Gastrocnemius medialis (tissue), 4 donors: ENCODE measurements at regions of chr22 and their contacts with region 1.

Region 1: GRCh38 chr22:20016734-20017621 is at the start of gene ARVCF:
- DNase-seq: peak; percentile 92
- ATAC-seq: peak; percentile 70 to 76
- H3K4me3 ChIP-seq: peak within 1 kb of the TSS; percentile 69 to 88 (median 86)
- H3K27ac ChIP-seq: peak within 1 kb of the TSS; percentile 75 to 81 (median 78)
- H3K4me1 ChIP-seq: peaks cover 23 to 28% of the 10 kb centered on the region in 2 donors
- H3K27me3 ChIP-seq: no peaks in the 10 kb centered on the region
- CTCF ChIP-seq: peak in 3 of 5 experiments; percentile 44 to 57 (median 56)
- POLR2A ChIP-seq: peak; percentile 44 to 70
- total RNA-seq, gene ARVCF: 6.9 to 19.6 (median 18.0) TPM

Region 2: DNA sequence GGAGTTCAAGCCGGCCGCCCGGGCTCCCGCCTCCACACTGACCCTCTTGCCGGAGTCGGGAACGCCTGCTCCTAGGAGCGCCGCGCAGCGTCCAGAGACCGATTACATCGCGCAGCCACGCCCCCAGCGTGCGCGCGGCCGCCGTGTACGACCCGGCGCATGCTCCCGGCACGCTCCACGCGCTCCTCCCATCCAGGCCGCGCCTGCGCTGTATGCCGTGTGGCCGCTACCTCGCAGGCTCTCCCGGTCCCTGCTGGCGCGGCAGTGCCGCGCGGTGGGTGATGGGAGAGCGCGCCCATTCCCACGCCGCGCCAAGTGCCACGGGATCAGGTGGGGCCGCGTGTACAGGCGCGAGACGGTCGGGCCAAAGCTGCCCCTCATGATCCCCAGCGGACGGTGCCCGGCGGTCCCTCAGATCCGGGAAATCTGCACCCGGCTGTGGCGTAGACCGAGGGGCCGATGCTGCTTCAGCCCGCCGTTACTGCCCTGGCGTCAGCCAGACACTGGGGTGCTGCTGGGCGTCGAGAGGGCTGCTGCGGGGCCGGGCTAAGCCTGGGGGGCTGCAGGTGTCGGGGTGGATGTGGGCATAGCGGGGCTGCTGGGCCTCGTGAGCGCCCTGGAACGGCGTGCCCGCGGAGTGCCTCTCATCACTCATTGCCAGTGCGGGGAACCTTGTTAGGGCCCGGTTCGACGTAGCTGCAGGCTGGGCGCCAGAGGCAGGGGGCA is 162.0 kb before region 1 on chr22 and contains the starts of genes GNB1L and RTL10:
- in situ Hi-C with region 1: no loop called
- intact Hi-C with region 1: loop called (anchors 5 kb)
- DNase-seq: peak; percentile 94 to 97
- ATAC-seq: peak; percentile 91
- H3K4me3 ChIP-seq: peak within 1 kb of the TSS; percentile 85 to 98 (median 94)
- H3K27ac ChIP-seq: peak within 1 kb of the TSS; percentile 91 to 98 (median 96)
- H3K4me1 ChIP-seq: peaks cover 20 to 31% of the 10 kb centered on the region in 2 donors
- H3K27me3 ChIP-seq: no peaks in the 10 kb centered on the region
- CTCF ChIP-seq: no peak
- POLR2A ChIP-seq: peak; percentile 96 to 98
- total RNA-seq, gene GNB1L: 4.4 to 9.6 (median 6.7) TPM
- total RNA-seq, gene RTL10: 3.5 to 12.8 (median 5.0) TPM

Region 3: GRCh38 chr22:19909350-19910179 is 107.4 kb before region 1 on chr22:
- in situ Hi-C with region 1: no loop called
- intact Hi-C with region 1: no loop called
- DNase-seq: peak; percentile 59 to 77
- ATAC-seq: peak; percentile 93 to 94
- H3K4me3 ChIP-seq: no peak overlapping the region
- H3K27ac ChIP-seq: no peak overlapping the region
- H3K4me1 ChIP-seq: no peaks in the 10 kb centered on the region
- H3K27me3 ChIP-seq: no peaks in the 10 kb centered on the region
- CTCF ChIP-seq: peak; percentile 77 to 93 (median 87)
- POLR2A ChIP-seq: no peak

Region 4: DNA sequence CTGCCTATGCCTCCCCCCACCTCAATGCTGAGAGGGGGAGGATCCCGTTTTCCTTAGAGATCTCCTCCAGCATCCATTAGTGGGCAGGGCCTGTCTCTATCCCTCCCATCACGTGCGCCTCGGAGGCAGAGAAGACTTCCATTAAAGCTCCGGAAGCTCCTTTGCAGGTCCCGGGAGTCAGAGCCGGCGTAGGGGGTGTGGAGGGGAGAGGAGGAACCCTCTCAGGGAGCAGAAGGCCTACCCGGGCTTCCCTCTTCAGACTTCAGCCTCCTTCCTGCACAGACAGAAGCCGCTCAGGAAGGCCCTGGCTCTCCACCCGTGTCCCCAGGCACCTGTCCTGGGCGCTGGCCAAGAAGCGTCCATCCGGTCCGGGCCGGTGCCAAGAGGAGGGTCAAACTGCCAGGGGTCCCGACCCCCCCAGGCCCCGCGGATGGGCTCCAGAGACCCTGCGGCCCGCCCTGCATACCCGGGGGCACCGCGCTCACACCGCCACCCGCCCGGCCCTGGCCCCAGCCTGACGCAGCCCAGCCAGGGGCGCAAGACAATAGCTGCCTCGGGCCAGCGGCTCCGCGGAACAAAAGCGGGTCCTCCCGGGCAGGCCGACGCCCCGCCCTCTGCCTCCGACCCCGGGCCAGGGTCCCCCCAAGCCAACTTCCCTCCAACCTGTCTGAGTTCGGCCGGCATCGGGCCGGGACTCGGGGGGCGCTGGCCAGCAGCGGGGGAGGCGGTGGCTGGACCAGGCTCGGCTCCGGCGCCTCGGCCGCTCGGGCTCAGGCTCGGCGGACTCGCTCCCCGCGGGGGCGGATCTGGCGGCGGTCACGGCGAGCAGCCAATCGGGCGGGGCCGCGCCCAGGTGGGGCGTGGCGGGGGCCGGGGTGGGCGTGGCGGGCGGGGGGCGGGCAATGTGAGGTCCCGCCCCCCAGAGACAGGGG is 30.3 kb before region 1 on chr22:
- in situ Hi-C with region 1: no loop called
- intact Hi-C with region 1: loop called (anchors 1 kb)
- DNase-seq: peak; percentile 50 to 73
- ATAC-seq: peak; percentile 59 to 64
- H3K4me3 ChIP-seq: peak overlapping the region; percentile 61 to 98 (median 86)
- H3K27ac ChIP-seq: peak overlapping the region; percentile 92 to 100 (median 96)
- H3K4me1 ChIP-seq: peaks cover 45 to 51% of the 10 kb centered on the region in 2 donors
- H3K27me3 ChIP-seq: no peaks in the 10 kb centered on the region
- CTCF ChIP-seq: no peak
- POLR2A ChIP-seq: peak; percentile 94 to 95

Region 5: DNA sequence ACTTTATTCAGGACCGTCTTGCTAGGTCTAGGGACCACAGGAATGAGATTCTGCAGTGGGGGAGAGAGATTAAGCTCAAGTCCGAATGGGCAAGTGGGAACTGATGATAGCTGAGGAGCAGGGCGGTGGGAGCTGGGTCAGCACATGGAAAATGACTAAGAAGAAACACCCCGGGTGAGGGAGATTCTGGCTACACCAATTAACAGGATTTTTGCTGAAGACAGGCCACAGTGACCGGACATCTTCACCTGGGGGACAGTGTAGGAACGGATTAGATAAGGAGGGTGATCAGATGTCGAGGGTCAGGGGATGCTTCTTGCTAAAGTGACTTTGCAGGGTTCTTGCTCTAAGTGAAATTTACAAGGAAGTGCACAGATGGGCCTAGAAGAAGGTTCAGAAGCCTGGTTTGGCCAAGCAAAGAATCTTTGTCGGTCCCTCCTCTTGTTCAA is 54.6 kb after region 1 on chr22:
- in situ Hi-C with region 1: no loop called
- intact Hi-C with region 1: no loop called
- DNase-seq: no peak
- ATAC-seq: no peak
- H3K4me3 ChIP-seq: no peak overlapping the region
- H3K27ac ChIP-seq: no peak overlapping the region
- H3K4me1 ChIP-seq: no peaks in the 10 kb centered on the region
- H3K27me3 ChIP-seq: no peaks in the 10 kb centered on the region
- CTCF ChIP-seq: no peak
- POLR2A ChIP-seq: no peak

Region 6: GRCh38 chr22:20116951-20117645 is 100.1 kb after region 1 on chr22 and contains the start of gene TRMT2A:
- in situ Hi-C with region 1: no loop called
- intact Hi-C with region 1: loop called (anchors 5 kb)
- DNase-seq: peak; percentile 94 to 98
- ATAC-seq: peak; percentile 90 to 93
- H3K4me3 ChIP-seq: peak within 1 kb of the TSS; percentile 79 to 97 (median 86)
- H3K27ac ChIP-seq: peak within 1 kb of the TSS; percentile 94 to 99 (median 96)
- H3K4me1 ChIP-seq: peaks cover 28 to 34% of the 10 kb centered on the region in 2 donors
- H3K27me3 ChIP-seq: no peaks in the 10 kb centered on the region
- CTCF ChIP-seq: peak in 2 of 5 experiments; percentile 9 to 10
- POLR2A ChIP-seq: peak; percentile 76 to 79
- total RNA-seq, gene TRMT2A: 16.9 to 38.0 (median 28.2) TPM

Region 7: GRCh38 chr22:20495861-20496681 is 479.1 kb after region 1 on chr22:
- in situ Hi-C with region 1: no loop called
- intact Hi-C with region 1: loop called (anchors 2 kb)
- DNase-seq: peak; percentile 88 to 89
- ATAC-seq: peak; percentile 84
- H3K4me3 ChIP-seq: peak overlapping the region; percentile 63 to 74 (median 72)
- H3K27ac ChIP-seq: peak overlapping the region; percentile 92 to 96 (median 96)
- H3K4me1 ChIP-seq: peaks cover 10 to 16% of the 10 kb centered on the region in 2 donors
- H3K27me3 ChIP-seq: no peaks in the 10 kb centered on the region
- CTCF ChIP-seq: peak in 4 of 5 experiments; percentile 88 to 92 (median 90)
- POLR2A ChIP-seq: peak; percentile 90 to 96